AG04450 (cell line): ENCODE measurements at regions of chr15 and their contacts with region 1.

Region 1: DNA sequence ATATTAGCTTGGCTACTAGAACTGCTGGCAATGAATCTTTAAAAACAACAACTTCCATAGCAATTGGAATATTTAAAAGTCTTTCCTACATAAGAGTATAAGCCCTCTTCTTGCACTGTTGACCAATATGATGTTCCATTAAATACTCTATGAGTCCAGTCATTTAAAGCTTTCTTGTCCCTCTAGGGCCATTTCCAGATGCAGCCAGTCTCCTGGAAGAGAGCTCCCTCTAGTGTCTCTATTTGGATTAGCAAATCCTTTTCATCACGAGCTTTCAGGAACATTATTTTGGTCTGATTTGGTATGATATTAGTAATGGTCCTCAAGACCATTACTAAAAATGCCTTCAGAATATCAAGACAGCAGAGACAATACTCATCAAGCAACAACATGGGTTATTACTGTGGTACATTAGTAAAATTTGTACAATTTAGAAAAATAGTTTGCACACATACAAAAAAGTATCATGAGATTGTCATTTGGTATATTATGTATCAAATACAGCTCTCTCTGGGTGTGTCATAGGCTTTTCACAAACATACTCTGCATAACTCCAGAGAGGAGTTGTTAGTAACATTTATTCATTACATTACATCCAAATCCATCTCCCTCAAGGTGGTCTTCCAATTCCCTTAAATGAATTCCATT is 101.3 kb downstream of the DPH6 start:
- DNase-seq: no peak
- H3K4me3 ChIP-seq: no peak overlapping the region
- H3K27ac ChIP-seq: no peak overlapping the region
- H3K27me3 ChIP-seq: no peaks in the 10 kb centered on the region
- CTCF ChIP-seq: peak; percentile 82

Region 2: GRCh38 chr15:35078221-35078915 is 366.3 kb before region 1 on chr15:
- CTCF ChIA-PET with region 1: interaction called, 71 read pairs
- POLR2A ChIA-PET with region 1: no interaction called
- DNase-seq: peak; percentile 44
- H3K4me3 ChIP-seq: no peak overlapping the region
- H3K27ac ChIP-seq: no peak overlapping the region
- H3K27me3 ChIP-seq: no peaks in the 10 kb centered on the region
- CTCF ChIP-seq: peak; percentile 83

Region 3: GRCh38 chr15:35115155-35115725 is 329.4 kb before region 1 on chr15:
- CTCF ChIA-PET with region 1: no interaction called
- POLR2A ChIA-PET with region 1: no interaction called
- DNase-seq: no peak
- H3K4me3 ChIP-seq: no peak overlapping the region
- H3K27ac ChIP-seq: no peak overlapping the region
- H3K27me3 ChIP-seq: no peaks in the 10 kb centered on the region
- CTCF ChIP-seq: no peak

Region 4: GRCh38 chr15:35289024-35289617 is 155.6 kb before region 1 on chr15:
- CTCF ChIA-PET with region 1: interaction called, 188 read pairs
- POLR2A ChIA-PET with region 1: no interaction called
- DNase-seq: peak; percentile 55
- H3K4me3 ChIP-seq: no peak overlapping the region
- H3K27ac ChIP-seq: no peak overlapping the region
- H3K27me3 ChIP-seq: no peaks in the 10 kb centered on the region
- CTCF ChIP-seq: peak; percentile 87

Region 5: DNA sequence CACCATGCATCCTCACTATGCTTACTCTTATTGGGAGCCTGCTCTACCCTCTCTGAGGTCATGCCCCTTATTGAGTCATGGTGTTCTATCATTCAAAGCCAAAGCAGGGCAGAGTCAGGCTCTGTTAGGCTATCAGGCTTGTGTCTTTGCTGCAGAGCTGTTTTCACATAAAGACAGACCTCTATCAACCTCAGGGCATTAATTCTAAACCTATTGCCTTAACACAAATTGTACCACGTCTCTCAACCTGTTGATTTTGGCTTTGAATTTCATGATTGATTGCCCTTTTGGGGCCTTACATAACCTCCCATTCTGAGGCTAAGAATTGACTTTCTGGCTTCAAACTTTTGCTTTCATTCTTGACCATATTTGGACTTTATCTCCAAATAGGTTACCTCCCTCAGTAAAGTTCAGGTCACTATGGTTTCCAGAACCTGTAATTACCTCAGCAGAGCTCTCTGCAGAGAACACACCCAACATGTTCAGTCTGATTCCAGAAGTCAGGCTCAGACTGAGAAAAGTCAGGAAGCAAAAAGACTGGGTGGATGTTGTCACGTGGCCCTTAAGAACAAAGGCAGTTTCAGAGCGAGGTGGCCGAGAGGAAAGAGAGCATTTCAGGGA is 138.2 kb before region 1 on chr15:
- CTCF ChIA-PET with region 1: interaction called, 16 read pairs
- POLR2A ChIA-PET with region 1: no interaction called
- DNase-seq: no peak
- H3K4me3 ChIP-seq: no peak overlapping the region
- H3K27ac ChIP-seq: peak overlapping the region; percentile 83
- H3K27me3 ChIP-seq: no peaks in the 10 kb centered on the region
- CTCF ChIP-seq: no peak

Region 6: DNA sequence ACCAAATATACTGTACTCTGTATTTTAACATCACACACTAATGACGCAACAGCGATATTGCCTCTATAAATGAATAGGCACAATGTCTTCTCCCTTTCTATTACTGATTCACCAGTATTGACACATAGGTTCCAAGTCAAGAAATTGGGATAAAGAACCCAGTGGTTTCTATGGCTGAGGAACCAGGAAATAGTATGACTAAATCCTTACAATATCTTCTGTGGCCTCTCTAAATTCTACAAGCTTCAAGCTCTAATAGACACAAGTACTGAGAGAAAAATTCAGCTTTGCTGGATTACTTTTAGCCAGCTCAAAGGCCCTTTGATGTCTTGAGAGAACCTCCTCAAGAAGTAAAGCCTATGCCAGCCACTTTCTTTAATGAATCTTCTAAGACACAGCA is 61.2 kb before region 1 on chr15:
- CTCF ChIA-PET with region 1: no interaction called
- POLR2A ChIA-PET with region 1: no interaction called
- DNase-seq: no peak
- H3K4me3 ChIP-seq: no peak overlapping the region
- H3K27ac ChIP-seq: no peak overlapping the region
- H3K27me3 ChIP-seq: no peaks in the 10 kb centered on the region
- CTCF ChIP-seq: no peak

Region 7: DNA sequence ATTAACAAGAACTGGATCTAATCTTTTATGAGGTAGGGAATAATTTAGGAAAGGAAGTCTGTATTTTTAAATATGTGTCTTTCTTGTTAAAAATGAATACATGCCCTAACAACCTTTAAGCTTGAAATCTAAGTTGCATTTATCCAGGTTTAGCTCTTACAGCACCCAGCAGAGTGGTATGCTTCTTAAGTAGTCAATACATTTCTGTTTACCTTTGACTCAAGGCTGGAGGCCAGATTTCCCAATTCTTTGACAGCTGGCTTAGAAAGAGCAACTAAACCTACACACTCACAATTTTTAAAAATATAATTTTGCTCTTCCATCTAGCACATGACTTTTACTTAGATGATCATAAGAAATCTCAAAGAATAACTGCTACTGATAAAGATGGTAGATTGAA is 47.7 kb before region 1 on chr15:
- CTCF ChIA-PET with region 1: interaction called, 13 read pairs
- POLR2A ChIA-PET with region 1: no interaction called
- DNase-seq: no peak
- H3K4me3 ChIP-seq: no peak overlapping the region
- H3K27ac ChIP-seq: no peak overlapping the region
- H3K27me3 ChIP-seq: no peaks in the 10 kb centered on the region
- CTCF ChIP-seq: no peak

Region 8: DNA sequence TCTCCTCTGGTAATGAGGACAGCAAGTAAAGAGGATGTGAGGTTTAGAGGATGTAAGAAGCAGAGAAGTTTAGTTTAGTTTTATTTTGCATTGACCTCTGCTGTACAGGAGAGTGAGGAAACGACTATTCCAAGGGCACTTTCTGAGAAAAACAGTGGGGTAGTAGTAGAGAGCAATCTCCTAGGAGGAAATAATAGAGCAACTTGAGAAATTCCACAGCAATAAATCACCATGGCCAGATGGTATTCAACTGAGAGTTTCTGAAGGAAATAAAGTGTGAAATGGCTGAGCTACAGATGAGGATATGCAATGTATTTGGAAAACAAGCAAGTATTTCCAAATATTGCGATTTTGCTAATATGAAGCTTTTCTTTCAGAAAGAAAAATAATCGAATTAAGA is 17.6 kb before region 1 on chr15:
- CTCF ChIA-PET with region 1: interaction called, 24 read pairs
- POLR2A ChIA-PET with region 1: no interaction called
- DNase-seq: peak; percentile 27
- H3K4me3 ChIP-seq: no peak overlapping the region
- H3K27ac ChIP-seq: no peak overlapping the region
- H3K27me3 ChIP-seq: no peaks in the 10 kb centered on the region
- CTCF ChIP-seq: no peak

Region 9: DNA sequence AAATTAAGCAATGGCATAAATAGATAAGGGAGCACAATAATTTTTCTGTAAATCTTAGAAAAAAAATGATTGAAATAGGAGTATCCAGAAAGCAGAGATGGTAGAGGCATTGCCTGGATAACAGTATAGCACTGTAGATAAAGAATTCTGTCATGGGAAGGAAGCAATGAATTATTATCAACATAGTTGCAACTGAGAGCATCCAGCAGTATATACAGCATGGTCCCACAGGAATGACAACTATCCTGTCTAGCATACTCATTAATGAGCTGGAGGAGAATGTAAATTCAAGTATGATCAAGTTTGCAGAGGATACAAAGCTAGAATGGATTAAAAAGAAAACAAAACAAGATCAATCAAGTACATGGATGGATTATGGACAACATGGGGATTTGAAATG is 10.5 kb after region 1 on chr15:
- CTCF ChIA-PET with region 1: interaction called, 18 read pairs
- POLR2A ChIA-PET with region 1: no interaction called
- DNase-seq: no peak
- H3K4me3 ChIP-seq: no peak overlapping the region
- H3K27ac ChIP-seq: no peak overlapping the region
- H3K27me3 ChIP-seq: no peaks in the 10 kb centered on the region
- CTCF ChIP-seq: no peak

Region 10: GRCh38 chr15:35549567-35549966 is 104.9 kb after region 1 on chr15:
- CTCF ChIA-PET with region 1: no interaction called
- POLR2A ChIA-PET with region 1: no interaction called
- DNase-seq: no peak
- H3K4me3 ChIP-seq: no peak overlapping the region
- H3K27ac ChIP-seq: no peak overlapping the region
- H3K27me3 ChIP-seq: no peaks in the 10 kb centered on the region
- CTCF ChIP-seq: no peak

Region 11: GRCh38 chr15:35567392-35567791 is 122.7 kb after region 1 on chr15:
- CTCF ChIA-PET with region 1: no interaction called
- POLR2A ChIA-PET with region 1: no interaction called
- DNase-seq: no peak
- H3K4me3 ChIP-seq: no peak overlapping the region
- H3K27ac ChIP-seq: no peak overlapping the region
- H3K27me3 ChIP-seq: no peaks in the 10 kb centered on the region
- CTCF ChIP-seq: no peak